ENCODE measurements at regions of chr17 and their contacts with region 1.

Region 1: GRCh38 chr17:78360371-78361224 is 721 bp upstream of the SOCS3 start:
- DNase-seq: peak; percentile 78 to 95 (median 89)
- ATAC-seq: peak; percentile 13
- H3K4me3 ChIP-seq: peak overlapping the region; percentile 85
- H3K4me3 Mint-ChIP-seq: peak overlapping the region; percentile 95
- H3K27ac ChIP-seq: peak overlapping the region in 1 of 2 donors; percentile 67
- H3K27ac Mint-ChIP-seq: peak overlapping the region; percentile 97
- H3K4me1 ChIP-seq: peaks cover 47% of the 10 kb centered on the region
- H3K4me1 Mint-ChIP-seq: peaks cover 41% of the 10 kb centered on the region
- H3K27me3 ChIP-seq: peaks cover 2 to 3% of the 10 kb centered on the region in 2 experiments
- H3K27me3 Mint-ChIP-seq: no peaks in the 10 kb centered on the region
- CTCF ChIP-seq: peak; percentile 90

Region 2: GRCh38 chr17:77948690-77949114 is 411.9 kb before region 1 on chr17:
- CTCF ChIA-PET with region 1: no interaction called
- POLR2A ChIA-PET with region 1: no interaction called
- intact Hi-C with region 1: no loop called
- DNase-seq: no peak
- ATAC-seq: no peak
- H3K4me3 ChIP-seq: no peak overlapping the region
- H3K4me3 Mint-ChIP-seq: no peak overlapping the region
- H3K27ac ChIP-seq: no peak overlapping the region
- H3K27ac Mint-ChIP-seq: no peak overlapping the region
- H3K4me1 ChIP-seq: peaks cover 2% of the 10 kb centered on the region
- H3K4me1 Mint-ChIP-seq: no peaks in the 10 kb centered on the region
- H3K27me3 ChIP-seq: no peaks in the 10 kb centered on the region
- H3K27me3 Mint-ChIP-seq: peaks cover 6% of the 10 kb centered on the region
- CTCF ChIP-seq: no peak

Region 3: GRCh38 chr17:78154903-78155811 is 205.4 kb before region 1 on chr17:
- CTCF ChIA-PET with region 1: no interaction called
- POLR2A ChIA-PET with region 1: no interaction called
- intact Hi-C with region 1: no loop called
- DNase-seq: peak in 2 of 14 experiments; percentile 51 to 56
- ATAC-seq: peak; percentile 57
- H3K4me3 ChIP-seq: no peak overlapping the region
- H3K4me3 Mint-ChIP-seq: no peak overlapping the region
- H3K27ac ChIP-seq: no peak overlapping the region
- H3K27ac Mint-ChIP-seq: no peak overlapping the region
- H3K4me1 ChIP-seq: peaks cover 4% of the 10 kb centered on the region
- H3K4me1 Mint-ChIP-seq: peaks cover 4% of the 10 kb centered on the region
- H3K27me3 ChIP-seq: no peaks in the 10 kb centered on the region
- H3K27me3 Mint-ChIP-seq: no peaks in the 10 kb centered on the region
- CTCF ChIP-seq: no peak

Region 4: DNA sequence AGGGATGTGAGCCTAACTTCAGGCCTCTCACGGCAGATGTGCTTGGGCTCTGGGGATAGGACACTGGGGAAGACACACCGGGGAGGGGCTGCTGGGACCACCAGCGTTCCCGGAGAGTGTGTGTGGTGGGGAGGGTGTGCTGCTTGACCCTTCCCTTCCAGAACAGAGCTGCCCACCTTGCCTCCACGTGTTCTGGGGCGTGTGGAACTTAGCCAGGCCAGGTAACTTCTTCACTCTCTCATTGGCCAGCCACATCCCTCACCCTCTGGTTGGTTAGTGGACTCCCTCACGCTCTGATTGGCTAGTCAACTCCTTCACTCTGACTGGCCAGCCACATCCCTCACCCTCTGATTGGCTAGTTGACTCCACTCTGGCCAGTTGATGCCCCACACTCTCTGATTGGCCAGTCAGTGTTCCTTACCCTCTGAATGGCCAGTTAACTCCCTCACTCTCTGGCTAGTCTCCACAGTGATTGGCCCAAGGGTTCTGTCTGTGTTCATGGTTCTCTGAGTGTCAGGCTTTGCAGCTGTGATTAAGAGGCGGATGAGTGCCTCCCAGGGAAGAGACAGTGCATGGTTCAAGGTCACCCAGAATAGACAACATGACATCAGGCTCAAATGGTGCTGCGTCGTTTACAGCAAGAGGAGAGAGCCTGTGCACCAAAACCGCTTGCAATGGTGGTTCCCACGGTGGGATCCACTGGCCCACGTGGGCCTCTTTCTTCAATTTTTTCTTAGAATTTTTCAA is 119.1 kb before region 1 on chr17:
- CTCF ChIA-PET with region 1: no interaction called
- POLR2A ChIA-PET with region 1: no interaction called
- intact Hi-C with region 1: no loop called
- DNase-seq: peak in 1 of 14 experiments; percentile 31
- ATAC-seq: no peak
- H3K4me3 ChIP-seq: no peak overlapping the region
- H3K4me3 Mint-ChIP-seq: no peak overlapping the region
- H3K27ac ChIP-seq: no peak overlapping the region
- H3K27ac Mint-ChIP-seq: no peak overlapping the region
- H3K4me1 ChIP-seq: no peaks in the 10 kb centered on the region
- H3K4me1 Mint-ChIP-seq: no peaks in the 10 kb centered on the region
- H3K27me3 ChIP-seq: no peaks in the 10 kb centered on the region
- H3K27me3 Mint-ChIP-seq: no peaks in the 10 kb centered on the region
- CTCF ChIP-seq: no peak

Region 5: GRCh38 chr17:78272181-78272913 is 88.3 kb before region 1 on chr17:
- CTCF ChIA-PET with region 1: interaction called, 6 read pairs
- POLR2A ChIA-PET with region 1: interaction called, 4 read pairs
- intact Hi-C with region 1: loop called in 1 of 2 experiments (anchors 1 kb)
- DNase-seq: peak; percentile 47 to 88 (median 64)
- ATAC-seq: peak; percentile 90
- H3K4me3 ChIP-seq: no peak overlapping the region
- H3K4me3 Mint-ChIP-seq: peak overlapping the region; percentile 59
- H3K27ac ChIP-seq: peak overlapping the region in 1 of 2 donors; percentile 30
- H3K27ac Mint-ChIP-seq: peak overlapping the region; percentile 95
- H3K4me1 ChIP-seq: peaks cover 50% of the 10 kb centered on the region
- H3K4me1 Mint-ChIP-seq: peaks cover 48% of the 10 kb centered on the region
- H3K27me3 ChIP-seq: no peaks in the 10 kb centered on the region
- H3K27me3 Mint-ChIP-seq: no peaks in the 10 kb centered on the region
- CTCF ChIP-seq: no peak

Region 6: DNA sequence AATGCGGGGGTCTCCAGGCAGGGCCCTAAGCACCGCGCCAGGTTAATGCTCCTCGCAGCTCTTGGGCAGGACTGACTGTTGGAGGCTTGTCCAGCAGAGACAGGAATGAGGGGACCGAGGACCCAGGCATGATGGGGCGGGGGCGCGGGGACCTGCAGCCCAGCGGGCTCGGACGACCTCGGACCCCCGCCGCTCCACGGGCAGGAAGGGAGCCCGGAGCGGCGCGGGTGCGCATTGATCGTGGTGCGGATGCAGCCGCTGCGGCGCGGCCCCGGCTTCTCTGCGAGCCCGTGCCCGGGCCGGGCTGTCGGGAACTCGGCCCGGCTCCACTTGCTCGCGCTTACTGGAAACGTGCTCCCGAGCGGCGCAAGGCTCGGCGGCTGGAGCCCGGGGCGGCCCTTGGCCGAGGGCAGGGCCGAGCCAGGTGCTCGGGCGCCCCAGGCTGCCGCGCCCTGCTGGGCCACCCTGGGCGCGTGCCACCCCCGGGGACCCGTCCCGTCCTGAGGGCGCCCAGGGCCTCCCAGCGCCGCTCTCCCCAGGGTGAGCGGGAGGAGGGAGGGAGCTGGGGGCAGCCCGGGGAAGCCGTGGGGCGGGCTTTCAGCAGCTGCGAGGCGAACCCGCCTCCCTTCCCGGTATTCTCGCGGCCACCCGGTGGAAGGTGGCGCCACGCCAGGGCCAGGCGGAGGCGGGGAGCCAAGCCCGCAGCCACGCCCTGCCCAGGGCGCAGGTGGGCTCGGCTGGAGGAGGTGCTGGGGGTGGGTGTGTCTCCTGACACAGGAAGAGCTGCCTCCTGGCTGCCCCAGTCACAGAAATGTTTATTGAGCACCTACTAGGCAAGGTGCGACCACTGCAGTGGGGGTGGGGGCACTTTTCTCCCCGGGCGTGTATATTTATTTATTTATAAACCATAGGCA is 46.6 kb before region 1 on chr17:
- CTCF ChIA-PET with region 1: interaction called, 7 read pairs
- POLR2A ChIA-PET with region 1: interaction called, 29 read pairs
- intact Hi-C with region 1: loop called in 1 of 2 experiments (anchors 2 kb)
- DNase-seq: peak; percentile 29 to 88 (median 72)
- ATAC-seq: peak; percentile 79
- H3K4me3 ChIP-seq: peak overlapping the region; percentile 26
- H3K4me3 Mint-ChIP-seq: peak overlapping the region; percentile 86
- H3K27ac ChIP-seq: no peak overlapping the region
- H3K27ac Mint-ChIP-seq: peak overlapping the region; percentile 74
- H3K4me1 ChIP-seq: peaks cover 55% of the 10 kb centered on the region
- H3K4me1 Mint-ChIP-seq: peaks cover 48% of the 10 kb centered on the region
- H3K27me3 ChIP-seq: no peaks in the 10 kb centered on the region
- H3K27me3 Mint-ChIP-seq: no peaks in the 10 kb centered on the region
- CTCF ChIP-seq: no peak

Region 7: GRCh38 chr17:78378225-78379130 is 17.9 kb after region 1 on chr17 and contains the start of gene PGS1:
- CTCF ChIA-PET with region 1: interaction called, 23 read pairs
- POLR2A ChIA-PET with region 1: interaction called, 6 read pairs
- intact Hi-C with region 1: loop called (anchors 1 kb)
- DNase-seq: peak; percentile 67 to 90 (median 80)
- ATAC-seq: peak; percentile 51
- H3K4me3 ChIP-seq: peak within 1 kb of the TSS; percentile 79
- H3K4me3 Mint-ChIP-seq: peak within 1 kb of the TSS; percentile 96
- H3K27ac ChIP-seq: peak within 1 kb of the TSS; percentile 51 to 63
- H3K27ac Mint-ChIP-seq: peak within 1 kb of the TSS; percentile 75
- H3K4me1 ChIP-seq: peaks cover 50% of the 10 kb centered on the region
- H3K4me1 Mint-ChIP-seq: peaks cover 36% of the 10 kb centered on the region
- H3K27me3 ChIP-seq: no peaks in the 10 kb centered on the region
- H3K27me3 Mint-ChIP-seq: no peaks in the 10 kb centered on the region
- CTCF ChIP-seq: no peak
- total RNA-seq, gene PGS1: 40.9 to 45.3 TPM

Region 8: DNA sequence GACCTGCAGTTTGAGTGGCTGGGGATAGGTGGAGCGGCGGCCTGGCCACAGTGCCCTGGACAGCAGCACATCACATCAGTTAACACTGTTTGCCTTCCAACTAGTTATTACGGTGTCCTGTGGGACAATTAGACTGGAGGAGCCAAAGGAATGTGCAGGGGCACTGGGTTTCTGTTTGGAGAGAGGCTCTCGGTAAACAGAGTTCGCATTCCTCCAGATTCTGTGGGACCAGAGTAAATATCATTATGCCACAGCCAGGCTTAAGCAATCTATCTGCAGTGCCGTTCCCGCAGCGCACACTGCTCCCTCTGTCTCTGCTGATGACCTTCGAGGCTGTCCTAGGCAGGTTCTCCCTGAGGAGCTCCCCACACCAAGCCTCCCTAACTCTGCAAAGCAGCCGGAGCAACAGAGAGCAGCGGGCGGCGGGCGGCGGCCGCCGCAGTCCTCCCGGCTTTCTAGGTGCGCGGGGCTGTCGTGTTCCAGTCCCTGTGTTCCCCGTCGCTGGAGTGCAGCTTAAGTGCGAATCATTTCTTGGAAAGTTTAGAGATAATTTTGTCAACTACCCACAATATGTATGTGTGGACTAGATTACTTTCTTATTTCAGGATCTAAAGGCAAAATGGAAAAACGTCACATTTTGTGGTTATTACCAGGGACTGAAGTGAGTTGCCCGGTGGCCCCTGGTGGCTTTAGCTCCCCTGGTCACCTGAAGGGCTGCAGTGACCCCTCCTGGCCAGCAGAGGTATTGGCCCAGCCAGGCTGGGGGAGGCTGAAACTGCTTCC is 61.1 kb after region 1 on chr17:
- CTCF ChIA-PET with region 1: interaction called, 40 read pairs
- POLR2A ChIA-PET with region 1: interaction called, 7 read pairs
- intact Hi-C with region 1: loop called (anchors 1 kb)
- DNase-seq: peak; percentile 56 to 85 (median 72)
- ATAC-seq: peak; percentile 97
- H3K4me3 ChIP-seq: no peak overlapping the region
- H3K4me3 Mint-ChIP-seq: no peak overlapping the region
- H3K27ac ChIP-seq: no peak overlapping the region
- H3K27ac Mint-ChIP-seq: peak overlapping the region; percentile 37
- H3K4me1 ChIP-seq: peaks cover 18% of the 10 kb centered on the region
- H3K4me1 Mint-ChIP-seq: peaks cover 31% of the 10 kb centered on the region
- H3K27me3 ChIP-seq: no peaks in the 10 kb centered on the region
- H3K27me3 Mint-ChIP-seq: no peaks in the 10 kb centered on the region
- CTCF ChIP-seq: peak; percentile 98

Measured in CD4-positive, alpha-beta T cell (primary cell).